Ascending aorta (tissue), 2 donors: ENCODE measurements at regions of chr1 and their contacts with region 1.

Region 1: DNA sequence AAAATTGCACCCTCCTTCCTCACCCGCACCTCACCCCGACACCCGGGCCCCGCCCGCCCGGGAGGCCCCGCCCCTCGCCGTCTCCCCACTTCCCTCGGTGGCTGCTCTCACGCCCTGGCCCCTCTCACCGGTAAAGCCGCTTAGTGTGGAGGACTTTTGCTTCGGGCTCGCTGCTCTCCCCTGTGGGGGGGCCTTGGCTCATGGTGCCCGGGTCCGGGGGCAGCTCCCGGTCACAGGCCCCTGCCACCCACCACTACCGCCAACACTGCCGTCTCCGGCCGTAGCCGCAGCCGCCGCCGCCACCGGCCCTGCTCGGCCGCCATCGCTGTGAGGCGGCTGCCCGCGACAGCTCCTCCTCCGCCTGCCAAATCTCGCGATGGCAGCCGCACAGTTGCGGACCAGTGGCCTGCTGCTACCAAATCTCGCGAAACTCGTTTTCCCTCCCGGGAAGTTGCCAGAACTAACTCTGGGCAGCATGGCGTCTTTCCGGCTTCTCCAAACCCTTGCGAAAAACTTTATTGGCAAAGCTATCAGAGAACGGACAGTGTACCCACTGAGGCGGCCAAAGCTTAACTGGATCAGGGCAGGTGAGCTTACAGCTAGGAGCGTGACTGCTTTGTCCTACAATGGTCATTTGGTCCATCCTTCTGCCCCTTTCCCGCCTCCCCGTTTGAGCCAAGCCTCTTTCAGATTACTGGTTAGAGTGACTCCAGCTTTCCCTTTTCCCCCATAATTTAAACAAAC is at the start of gene SMG5:
- DNase-seq: peak; percentile 86 to 98
- H3K4me3 ChIP-seq: peak within 1 kb of the TSS; percentile 81 to 88
- H3K27ac ChIP-seq: peak within 1 kb of the TSS; percentile 82 to 85
- H3K4me1 ChIP-seq: peaks cover 0 to 13% of the 10 kb centered on the region in 2 donors
- H3K27me3 ChIP-seq: no peaks in the 10 kb centered on the region
- CTCF ChIP-seq: no peak
- total RNA-seq, gene SMG5: 76.5 TPM

Region 2: DNA sequence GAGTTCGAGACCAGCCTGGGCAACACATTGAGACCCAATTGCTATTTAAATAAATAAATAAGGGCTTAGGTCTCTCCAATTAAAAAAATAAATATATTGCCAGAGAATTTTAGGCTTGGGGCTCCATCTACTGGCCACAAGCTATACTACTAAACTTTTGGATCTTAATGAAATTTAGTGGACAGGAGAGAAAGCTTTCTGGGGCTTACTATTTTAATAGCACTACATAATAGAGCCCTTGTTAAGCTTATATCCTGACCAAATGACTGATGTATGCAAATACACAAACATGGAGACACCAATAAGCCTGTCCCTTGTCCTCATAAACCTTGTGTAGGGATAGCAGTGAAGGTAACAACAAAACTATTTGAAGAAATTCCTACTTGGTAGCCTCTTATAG is 37.0 kb after region 1 on chr1:
- intact Hi-C with region 1: no loop called
- DNase-seq: no peak
- H3K4me3 ChIP-seq: no peak overlapping the region
- H3K27ac ChIP-seq: no peak overlapping the region
- H3K4me1 ChIP-seq: no peaks in the 10 kb centered on the region
- H3K27me3 ChIP-seq: no peaks in the 10 kb centered on the region
- CTCF ChIP-seq: peak; percentile 8 to 53 (median 19)

Region 3: GRCh38 chr1:156338180-156338973 is 55.7 kb after region 1 on chr1 and contains the starts of genes CCT3 and TSACC:
- intact Hi-C with region 1: loop called (anchors 1 kb)
- DNase-seq: peak; percentile 99 to 100
- H3K4me3 ChIP-seq: peak within 1 kb of the TSS; percentile 79 to 83
- H3K27ac ChIP-seq: peak within 1 kb of the TSS; percentile 74 to 82
- H3K4me1 ChIP-seq: peaks cover 13% of the 10 kb centered on the region in 2 donors
- H3K27me3 ChIP-seq: no peaks in the 10 kb centered on the region
- CTCF ChIP-seq: no peak
- total RNA-seq, gene CCT3: 109 TPM
- total RNA-seq, gene TSACC: not detected

Region 4: GRCh38 chr1:156625436-156626078 is 342.9 kb after region 1 on chr1:
- intact Hi-C with region 1: no loop called
- DNase-seq: no peak
- H3K4me3 ChIP-seq: peak overlapping the region; percentile 31 to 62
- H3K27ac ChIP-seq: no peak overlapping the region
- H3K4me1 ChIP-seq: peaks cover 8 to 17% of the 10 kb centered on the region in 2 donors
- H3K27me3 ChIP-seq: peaks cover 29% of the 10 kb centered on the region
- CTCF ChIP-seq: peak; percentile 67 to 80 (median 70)